ENCODE measurements at regions of chr22 and their contacts with region 1.

Region 1: DNA sequence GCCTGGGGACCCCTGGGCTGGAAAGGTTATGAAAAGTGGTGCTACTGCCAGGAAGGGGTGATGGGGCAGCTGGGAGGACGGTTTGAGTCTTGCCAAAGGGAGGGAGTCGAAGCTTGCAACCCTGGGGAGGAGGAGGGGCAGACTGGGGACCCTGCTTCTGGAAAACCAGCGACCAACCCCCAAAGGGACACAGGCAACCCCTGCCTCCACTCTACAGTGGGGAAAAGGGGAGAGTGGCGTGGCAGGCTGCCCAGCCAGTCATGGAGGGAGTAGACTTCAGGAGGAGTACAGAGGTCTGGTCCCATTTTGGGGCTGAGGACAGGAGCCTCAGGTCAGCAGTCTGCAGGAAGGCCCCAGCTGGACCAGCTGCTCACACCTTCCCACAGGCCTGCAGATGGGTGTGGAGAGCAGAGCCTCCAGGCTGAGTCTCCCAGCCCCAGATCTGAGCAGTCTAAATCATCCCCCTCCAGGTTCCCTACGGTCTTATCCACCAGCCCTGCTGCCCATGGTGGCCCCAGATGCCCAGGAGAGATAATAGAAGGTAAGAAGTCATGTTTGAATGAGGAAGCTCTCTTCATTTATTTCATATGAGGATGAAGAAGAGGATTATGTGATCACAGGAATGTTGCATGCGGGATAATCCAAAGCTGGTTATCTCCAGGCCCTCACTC is 3.3 kb downstream of the DDT start:
- DNase-seq: peak in 2 of 3 donors; percentile 27 to 72
- ATAC-seq: no peak
- H3K4me3 ChIP-seq: no peak overlapping the region
- H3K27ac ChIP-seq: peak overlapping the region in 1 of 3 donors; percentile 49
- H3K4me1 ChIP-seq: peaks cover 0 to 8% (median 0%) of the 10 kb centered on the region in 4 donors
- H3K27me3 ChIP-seq: no peaks in the 10 kb centered on the region
- CTCF ChIP-seq: no peak
- POLR2A ChIP-seq: no peak

Region 2: GRCh38 chr22:23913661-23914353 is 57.1 kb before region 1 on chr22:
- intact Hi-C with region 1: loop called in 1 of 2 experiments (anchors 10 kb)
- DNase-seq: peak; percentile 99 to 100 (median 100)
- ATAC-seq: peak; percentile 98 to 99 (median 99)
- H3K4me3 ChIP-seq: peak overlapping the region; percentile 46 to 63 (median 54)
- H3K27ac ChIP-seq: peak overlapping the region; percentile 60 to 84 (median 78)
- H3K4me1 ChIP-seq: peaks cover 0 to 13% (median 2%) of the 10 kb centered on the region in 4 donors
- H3K27me3 ChIP-seq: no peaks in the 10 kb centered on the region
- CTCF ChIP-seq: no peak
- POLR2A ChIP-seq: peak; percentile 88

Region 3: DNA sequence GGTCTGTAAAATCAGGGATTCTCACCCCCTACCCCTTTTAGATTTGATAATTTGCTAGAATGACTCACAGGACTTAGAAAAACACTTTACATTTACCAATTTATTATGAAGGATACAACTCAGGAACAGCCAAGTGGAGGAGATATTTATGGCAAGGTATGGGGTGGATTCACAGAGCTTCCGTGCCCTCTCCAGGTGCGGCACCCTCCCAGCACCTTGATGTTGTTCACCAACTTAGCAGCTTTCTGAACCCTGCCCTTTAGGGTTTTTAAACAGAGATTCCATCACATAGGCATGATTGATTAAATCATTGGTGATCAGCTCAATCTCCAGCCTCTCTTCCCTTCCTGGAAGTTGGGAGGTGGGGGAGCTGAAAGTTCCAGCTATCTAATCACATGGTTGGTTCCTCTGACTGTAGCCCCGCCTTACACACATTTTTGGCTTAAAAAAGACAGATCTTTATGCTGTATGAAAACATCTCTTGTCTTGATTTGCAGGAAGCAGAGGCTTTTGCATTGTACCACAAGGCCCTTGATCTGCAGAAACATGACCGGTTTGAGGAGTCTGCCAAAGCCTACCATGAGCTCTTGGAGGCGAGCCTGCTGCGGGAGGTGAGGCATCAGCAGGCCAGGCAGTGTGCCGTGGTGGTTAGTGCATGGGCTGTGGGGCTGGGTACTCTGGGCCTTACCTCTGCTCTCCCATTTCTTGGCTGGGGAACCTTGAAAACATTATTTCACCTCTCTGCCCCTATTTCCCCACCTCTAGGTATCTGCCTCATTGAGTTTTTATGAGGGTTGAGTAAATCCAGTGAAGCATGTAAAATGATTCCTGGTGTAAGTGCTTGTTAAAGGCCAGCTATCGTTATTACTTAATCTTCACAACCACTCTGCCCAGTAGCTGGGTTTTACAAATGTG is 67.2 kb after region 1 on chr22:
- intact Hi-C with region 1: no loop called
- DNase-seq: no peak
- ATAC-seq: no peak
- H3K4me3 ChIP-seq: no peak overlapping the region
- H3K27ac ChIP-seq: no peak overlapping the region
- H3K4me1 ChIP-seq: peaks cover 0 to 5% (median under 1%) of the 10 kb centered on the region in 4 donors
- H3K27me3 ChIP-seq: no peaks in the 10 kb centered on the region
- CTCF ChIP-seq: no peak
- POLR2A ChIP-seq: no peak